Activated B cell treated with CpG ODN at 0.5 μM for 24 hours (primary cell): ENCODE measurements at regions of chr3 and their contacts with region 1.

Region 1: DNA sequence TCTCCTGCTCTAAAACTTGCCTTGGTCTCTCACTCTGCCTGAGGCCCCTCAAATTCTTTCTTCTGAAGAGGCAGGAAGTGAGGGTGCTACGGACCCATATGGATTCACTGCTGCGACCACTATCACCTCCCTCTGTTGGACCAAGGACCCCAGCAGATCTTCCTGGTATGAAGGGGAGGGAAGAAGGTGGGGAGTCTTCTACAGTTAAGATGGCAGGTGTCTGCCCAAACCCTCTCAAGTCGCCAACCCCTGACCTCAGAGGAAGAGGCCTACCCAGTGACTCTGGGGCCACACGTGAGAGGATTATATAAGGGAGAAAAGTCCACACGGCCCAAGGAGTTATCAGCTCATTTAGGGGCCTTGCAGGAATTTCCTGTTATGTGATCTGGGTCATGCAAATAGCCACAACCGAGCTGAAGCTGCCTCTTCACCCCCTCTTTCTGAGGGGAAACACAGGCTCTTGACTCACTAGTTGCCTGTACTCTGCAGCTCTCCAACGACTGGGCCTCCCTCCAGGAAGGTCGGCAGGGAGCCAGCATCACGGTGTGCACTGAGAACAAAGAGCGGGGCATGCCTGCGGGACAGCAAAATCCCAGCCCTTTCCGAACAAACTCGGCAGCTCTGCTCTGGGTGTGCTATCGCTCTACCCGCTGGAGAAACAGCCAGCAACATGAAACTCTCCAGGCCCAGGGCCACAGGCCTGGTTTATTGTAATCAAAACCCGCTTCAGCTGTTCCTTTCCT is 116.0 kb downstream of the XXYLT1 start:
- DNase-seq: no peak
- ATAC-seq: peak; percentile 40
- H3K4me3 Mint-ChIP-seq: peak overlapping the region; percentile 53
- H3K27ac Mint-ChIP-seq: peak overlapping the region; percentile 90
- H3K4me1 Mint-ChIP-seq: peaks cover 90% of the 10 kb centered on the region
- H3K27me3 Mint-ChIP-seq: no peaks in the 10 kb centered on the region
- CTCF ChIP-seq: no peak

Region 2: DNA sequence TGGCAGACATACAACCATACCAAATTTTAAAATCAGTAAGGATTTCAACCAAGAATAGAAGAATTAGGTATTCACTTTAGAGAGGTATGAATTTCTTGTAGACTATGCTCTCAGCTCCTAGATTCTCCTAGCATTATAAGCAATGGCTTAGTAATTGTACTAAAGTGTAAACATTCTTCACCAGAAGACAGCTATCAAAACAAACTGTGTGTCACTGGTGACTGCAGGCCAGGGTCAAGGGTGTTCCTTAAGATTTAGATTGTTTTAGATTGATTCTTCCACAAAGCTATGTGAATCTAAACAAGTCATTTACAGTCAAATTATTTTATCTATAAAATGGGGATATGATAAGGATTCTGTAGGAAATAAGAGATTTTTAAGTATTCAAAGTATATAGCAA is 732.8 kb before region 1 on chr3:
- CTCF ChIA-PET with region 1: no interaction called
- POLR2A ChIA-PET with region 1: interaction called, 10 read pairs
- intact Hi-C with region 1: no loop called
- DNase-seq: no peak
- ATAC-seq: no peak
- H3K4me3 Mint-ChIP-seq: no peak overlapping the region
- H3K27ac Mint-ChIP-seq: no peak overlapping the region
- H3K4me1 Mint-ChIP-seq: no peaks in the 10 kb centered on the region
- H3K27me3 Mint-ChIP-seq: no peaks in the 10 kb centered on the region
- CTCF ChIP-seq: no peak

Region 3: DNA sequence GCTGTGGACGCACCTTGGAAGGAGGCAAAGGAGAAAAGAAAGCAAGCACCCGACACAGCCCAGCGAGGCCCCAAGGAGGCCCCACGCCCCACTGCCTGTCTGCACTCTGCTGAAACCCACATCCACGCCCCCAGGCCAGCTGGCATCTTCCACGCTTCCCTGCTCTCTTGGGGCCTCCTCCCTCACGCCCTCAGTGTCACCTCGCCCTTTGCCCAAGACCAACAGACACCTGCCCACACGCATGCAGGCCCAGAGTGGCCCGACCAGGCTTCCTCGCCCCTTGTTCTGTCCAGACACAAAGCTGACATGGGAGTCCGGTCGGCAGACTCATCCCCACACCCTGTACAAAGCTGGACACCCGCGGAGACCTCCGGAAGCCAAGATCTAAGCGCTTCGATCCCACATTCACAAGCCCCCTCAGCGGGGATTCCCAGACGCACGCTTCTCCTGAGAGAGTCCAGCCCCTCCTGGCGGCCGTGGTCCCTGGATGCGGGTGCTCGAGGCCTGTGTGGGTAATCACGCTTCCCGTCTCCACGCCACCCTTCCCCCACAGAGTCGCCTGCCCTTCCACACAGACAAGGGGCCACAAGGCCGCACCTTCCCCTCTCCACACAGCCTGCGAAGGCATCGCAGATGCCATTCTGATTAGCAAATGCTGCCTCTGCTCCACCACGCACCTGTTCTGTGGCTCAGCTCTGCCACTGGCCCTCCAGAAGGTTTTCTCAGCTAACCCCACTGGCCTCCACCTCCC is 60.6 kb before region 1 on chr3:
- CTCF ChIA-PET with region 1: no interaction called
- POLR2A ChIA-PET with region 1: no interaction called
- intact Hi-C with region 1: loop called (anchors 2 kb)
- DNase-seq: peak; percentile 61
- ATAC-seq: peak; percentile 86
- H3K4me3 Mint-ChIP-seq: peak overlapping the region; percentile 80
- H3K27ac Mint-ChIP-seq: peak overlapping the region; percentile 89
- H3K4me1 Mint-ChIP-seq: peaks cover 57% of the 10 kb centered on the region
- H3K27me3 Mint-ChIP-seq: no peaks in the 10 kb centered on the region
- CTCF ChIP-seq: no peak

Region 4: GRCh38 chr3:195194559-195195206 is 39.7 kb after region 1 on chr3:
- CTCF ChIA-PET with region 1: no interaction called
- POLR2A ChIA-PET with region 1: no interaction called
- intact Hi-C with region 1: loop called (anchors 5 kb)
- DNase-seq: no peak
- ATAC-seq: no peak
- H3K4me3 Mint-ChIP-seq: no peak overlapping the region
- H3K27ac Mint-ChIP-seq: no peak overlapping the region
- H3K4me1 Mint-ChIP-seq: peaks cover 20% of the 10 kb centered on the region
- H3K27me3 Mint-ChIP-seq: no peaks in the 10 kb centered on the region
- CTCF ChIP-seq: no peak

Region 5: GRCh38 chr3:195271116-195271858 is 116.3 kb after region 1 on chr3 and contains the start of gene XXYLT1:
- CTCF ChIA-PET with region 1: no interaction called
- POLR2A ChIA-PET with region 1: no interaction called
- intact Hi-C with region 1: no loop called
- DNase-seq: peak; percentile 84
- ATAC-seq: peak; percentile 87
- H3K4me3 Mint-ChIP-seq: peak within 1 kb of the TSS; percentile 87
- H3K27ac Mint-ChIP-seq: peak within 1 kb of the TSS; percentile 82
- H3K4me1 Mint-ChIP-seq: peaks cover 20% of the 10 kb centered on the region
- H3K27me3 Mint-ChIP-seq: no peaks in the 10 kb centered on the region
- CTCF ChIP-seq: peak; percentile 77
- total RNA-seq, gene XXYLT1: 7.6 and 7.9 TPM in 2 replicates